Right cardiac atrium (tissue), 5 donors: ENCODE measurements at regions of chr17 and their contacts with region 1.

Region 1: DNA sequence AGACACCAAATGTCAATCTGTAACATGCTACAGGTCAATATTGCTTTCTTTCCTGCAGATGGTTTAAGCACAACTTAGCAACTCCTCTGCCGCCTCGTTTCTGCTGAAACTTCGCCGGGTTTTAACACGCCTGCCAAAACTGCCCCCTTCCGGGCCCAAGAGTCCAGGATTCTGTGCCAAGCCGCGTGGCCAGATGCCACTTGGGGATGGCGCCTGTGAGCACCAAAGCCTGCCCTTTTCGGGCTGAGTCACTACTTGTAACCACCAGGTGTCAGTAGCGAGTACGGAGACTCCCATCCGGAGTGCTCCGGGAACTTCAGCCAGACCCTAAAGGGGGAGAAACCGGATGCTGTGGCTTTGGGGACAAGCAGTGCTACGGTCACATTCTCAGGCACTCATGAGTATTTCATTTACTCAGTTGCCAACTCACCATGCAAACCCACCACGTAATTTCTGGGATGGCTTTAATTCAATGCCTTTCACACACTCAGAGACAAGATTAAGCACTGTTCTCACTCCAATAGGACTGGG is 7.8 kb downstream of the PMP22 start:
- DNase-seq: peak; percentile 86 to 94 (median 94)
- ATAC-seq: peak; percentile 51 to 60
- H3K4me3 ChIP-seq: peak overlapping the region; percentile 12
- H3K27ac ChIP-seq: peak overlapping the region; percentile 50
- H3K4me1 ChIP-seq: peaks cover 17% of the 10 kb centered on the region
- H3K27me3 ChIP-seq: no peaks in the 10 kb centered on the region

Region 2: GRCh38 chr17:15341385-15341849 is 84.1 kb after region 1 on chr17 and contains the start of gene TEKT3:
- intact Hi-C with region 1: loop called in 1 of 4 experiments (anchors 5 kb)
- DNase-seq: peak; percentile 91 to 96 (median 93)
- ATAC-seq: peak; percentile 100
- H3K4me3 ChIP-seq: peak within 1 kb of the TSS; percentile 57
- H3K27ac ChIP-seq: no peak within 1 kb of the TSS
- H3K4me1 ChIP-seq: no peaks in the 10 kb centered on the region
- H3K27me3 ChIP-seq: no peaks in the 10 kb centered on the region
- total RNA-seq, gene TEKT3: 0.53 to 0.81 (median 0.77) TPM in 3 of 4 donors, not detected in the other

Region 3: GRCh38 chr17:15364615-15365014 is 107.3 kb after region 1 on chr17:
- intact Hi-C with region 1: no loop called
- DNase-seq: peak in 2 of 3 donors; percentile 19 to 59
- ATAC-seq: peak; percentile 54 to 67
- H3K4me3 ChIP-seq: no peak overlapping the region
- H3K27ac ChIP-seq: no peak overlapping the region
- H3K4me1 ChIP-seq: no peaks in the 10 kb centered on the region
- H3K27me3 ChIP-seq: no peaks in the 10 kb centered on the region

Region 4: GRCh38 chr17:15398736-15399331 is 141.5 kb after region 1 on chr17:
- intact Hi-C with region 1: loop called in 1 of 4 experiments (anchors 10 kb)
- DNase-seq: peak in 2 of 3 donors; percentile 58 to 74
- ATAC-seq: peak; percentile 74 to 75
- H3K4me3 ChIP-seq: no peak overlapping the region
- H3K27ac ChIP-seq: no peak overlapping the region
- H3K4me1 ChIP-seq: peaks cover 9% of the 10 kb centered on the region
- H3K27me3 ChIP-seq: no peaks in the 10 kb centered on the region

Region 5: DNA sequence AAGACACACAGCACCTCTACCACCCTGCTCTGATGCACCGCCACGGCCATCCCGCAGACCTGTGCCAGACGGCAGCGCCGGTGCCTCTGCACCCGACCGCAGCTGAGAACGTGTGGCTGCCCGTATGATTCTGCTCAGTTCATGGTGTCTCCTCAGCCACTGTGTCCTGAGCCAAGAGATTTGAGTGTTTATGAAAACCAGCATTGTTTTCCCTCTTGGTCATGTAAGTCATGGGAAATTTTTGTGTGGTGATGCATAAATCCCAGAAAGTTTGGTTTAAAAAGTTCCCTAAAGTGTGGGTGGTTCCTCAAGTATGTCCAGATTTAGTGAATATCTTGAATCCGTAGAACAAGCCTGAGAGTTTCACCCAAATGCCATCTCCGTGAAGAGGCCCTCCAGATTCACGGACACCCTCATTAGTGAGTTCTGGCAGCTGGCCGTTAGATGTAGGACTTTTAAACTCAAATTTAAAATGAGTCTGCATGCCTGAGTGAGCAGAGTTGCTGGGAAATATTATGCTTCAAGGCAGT is 152.5 kb after region 1 on chr17:
- intact Hi-C with region 1: loop called in 1 of 4 experiments (anchors 5 kb)
- DNase-seq: peak; percentile 70 to 87 (median 72)
- ATAC-seq: peak; percentile 85 to 88
- H3K4me3 ChIP-seq: no peak overlapping the region
- H3K27ac ChIP-seq: peak overlapping the region; percentile 70
- H3K4me1 ChIP-seq: no peaks in the 10 kb centered on the region
- H3K27me3 ChIP-seq: no peaks in the 10 kb centered on the region

Region 6: GRCh38 chr17:15444805-15445204 is 187.5 kb after region 1 on chr17:
- intact Hi-C with region 1: loop called in 1 of 4 experiments (anchors 5 kb)
- DNase-seq: no peak
- ATAC-seq: no peak
- H3K4me3 ChIP-seq: no peak overlapping the region
- H3K27ac ChIP-seq: no peak overlapping the region
- H3K4me1 ChIP-seq: peaks cover 14% of the 10 kb centered on the region
- H3K27me3 ChIP-seq: no peaks in the 10 kb centered on the region

Region 7: GRCh38 chr17:15502369-15503112 is 245.2 kb after region 1 on chr17:
- intact Hi-C with region 1: loop called (anchors 1 to 5 kb)
- DNase-seq: peak; percentile 93 to 97 (median 97)
- ATAC-seq: peak; percentile 94
- H3K4me3 ChIP-seq: peak overlapping the region; percentile 30
- H3K27ac ChIP-seq: peak overlapping the region; percentile 89
- H3K4me1 ChIP-seq: peaks cover 6% of the 10 kb centered on the region
- H3K27me3 ChIP-seq: no peaks in the 10 kb centered on the region